PC-9 (cell line): ENCODE measurements at regions of chr12 and their contacts with region 1.

Region 1: DNA sequence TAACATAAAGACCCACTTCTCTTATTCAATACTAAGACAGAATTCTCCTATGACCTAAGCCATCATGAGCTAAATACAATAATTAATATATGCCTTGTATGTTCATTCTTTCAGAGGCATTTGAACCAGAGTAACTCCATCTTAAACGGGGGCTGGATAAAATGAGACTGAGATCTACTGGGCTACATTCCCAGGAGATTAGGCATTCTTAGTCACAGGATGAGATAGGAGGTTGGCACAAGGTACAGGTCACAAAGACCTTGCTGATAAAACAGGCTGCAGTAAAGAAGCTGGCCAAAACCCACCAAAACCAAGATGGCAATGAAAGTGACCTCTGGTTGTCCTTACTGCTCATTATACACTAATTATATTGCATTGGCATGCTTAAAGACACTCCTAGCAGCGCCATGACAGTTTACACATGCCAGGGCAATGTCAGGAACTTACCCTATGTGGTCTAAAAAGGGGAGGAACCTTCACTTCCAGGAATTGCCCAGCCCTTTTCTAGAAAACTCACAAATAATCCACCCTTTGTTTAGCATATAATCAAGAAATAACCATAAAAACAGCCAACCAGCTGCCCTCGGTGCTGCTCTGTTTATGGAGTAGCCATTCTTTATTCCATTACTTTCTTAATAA is 260.7 kb downstream of the SSPN start:
- DNase-seq: no peak
- H3K4me3 ChIP-seq: no peak overlapping the region
- H3K27ac ChIP-seq: no peak overlapping the region
- H3K4me1 ChIP-seq: no peaks in the 10 kb centered on the region
- H3K27me3 ChIP-seq: no peaks in the 10 kb centered on the region
- CTCF ChIP-seq: no peak

Region 2: GRCh38 chr12:26646571-26646970 is 190.5 kb after region 1 on chr12:
- CTCF ChIA-PET with region 1: interaction called, 13 read pairs
- POLR2A ChIA-PET with region 1: no interaction called
- intact Hi-C with region 1: no loop called
- DNase-seq: no peak
- H3K4me3 ChIP-seq: no peak overlapping the region
- H3K27ac ChIP-seq: no peak overlapping the region
- H3K4me1 ChIP-seq: peaks cover 12% of the 10 kb centered on the region; the same call in 1 of the 2 replicates
- H3K27me3 ChIP-seq: no peaks in the 10 kb centered on the region
- CTCF ChIP-seq: no peak